ENCODE measurements at regions of chr12 and their contacts with region 1.

Region 1: GRCh38 chr12:94101738-94102660 is 46.4 kb upstream of the PLXNC1 start:
- DNase-seq: peak; percentile 91

Region 2: GRCh38 chr12:93563807-93564538 is 538.0 kb before region 1 on chr12:
- intact Hi-C with region 1: loop called (anchors 1 kb)
- DNase-seq: no peak

Region 3: GRCh38 chr12:93742110-93742934 is 359.7 kb before region 1 on chr12:
- intact Hi-C with region 1: loop called (anchors 5 kb)
- DNase-seq: peak; percentile 87

Region 4: DNA sequence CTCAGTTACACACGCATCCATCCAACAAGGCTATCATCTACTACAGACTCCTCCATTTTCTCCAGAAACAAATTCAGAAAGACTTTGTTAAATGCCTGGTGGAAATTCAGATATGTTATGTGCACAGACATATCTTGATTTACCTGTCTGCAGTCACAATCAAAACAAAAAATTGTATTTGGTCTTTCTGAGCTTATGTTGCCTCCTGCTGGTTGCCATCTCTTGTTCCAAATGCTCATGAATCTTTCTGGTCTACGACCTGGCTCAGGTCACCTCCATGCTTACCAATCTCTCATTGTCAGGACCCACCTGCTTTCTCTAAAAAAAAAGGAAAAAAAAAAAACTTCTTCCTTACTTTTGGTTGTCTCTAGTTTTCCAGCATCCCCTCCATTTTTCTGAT is 122.8 kb before region 1 on chr12:
- intact Hi-C with region 1: loop called (anchors 5 kb)
- DNase-seq: no peak

Region 5: GRCh38 chr12:94126067-94126466 is 24.1 kb after region 1 on chr12:
- intact Hi-C with region 1: no loop called
- DNase-seq: no peak

Measured in cardiac septum (tissue), 1 donor.